ENCODE measurements at regions of chr10 and their contacts with region 1.

Region 1: DNA sequence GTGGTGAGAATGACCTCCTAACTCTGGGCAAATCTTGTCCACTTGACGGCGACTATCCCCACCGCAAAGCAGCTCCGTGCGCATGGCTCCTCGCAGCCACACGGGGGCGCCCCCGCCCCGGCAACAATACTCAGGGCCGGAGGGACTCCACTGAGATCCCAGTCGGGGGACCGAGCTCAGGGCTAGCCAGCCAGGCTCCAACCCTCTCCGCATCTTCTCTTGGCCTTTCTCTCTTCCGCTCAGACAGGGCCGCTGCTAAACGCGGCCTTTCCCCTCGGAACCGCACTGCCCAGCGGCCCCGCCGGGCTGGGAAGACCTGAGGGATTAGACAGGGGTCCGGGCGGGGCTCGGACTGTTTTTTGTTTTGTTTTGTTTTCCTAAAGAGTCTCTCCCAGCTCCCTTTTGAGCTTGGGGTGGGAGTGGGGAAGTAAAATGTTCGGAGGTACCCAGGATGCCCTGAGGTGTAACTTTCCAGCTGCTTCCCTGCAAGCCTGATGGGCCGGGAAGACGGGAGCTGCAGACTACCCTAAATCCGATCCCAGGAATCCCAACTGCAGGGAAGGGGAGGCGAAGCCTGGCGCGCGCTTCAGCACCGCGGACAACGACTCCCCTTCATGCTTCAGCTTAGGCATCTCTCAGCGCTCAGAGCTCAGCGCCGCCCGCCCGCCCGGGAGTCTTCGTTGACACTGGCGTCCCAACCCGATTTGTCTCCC is 2.7 kb downstream of the KCNIP2 start:
- DNase-seq: no peak
- H3K4me3 ChIP-seq: peak overlapping the region in 1 of 2 donors; percentile 26
- H3K27ac ChIP-seq: no peak overlapping the region
- H3K4me1 ChIP-seq: peaks cover 46% of the 10 kb centered on the region
- H3K27me3 ChIP-seq: no peaks in the 10 kb centered on the region
- CTCF ChIP-seq: peak; percentile 21 to 59 (median 41)
- POLR2A ChIP-seq: no peak

Region 2: DNA sequence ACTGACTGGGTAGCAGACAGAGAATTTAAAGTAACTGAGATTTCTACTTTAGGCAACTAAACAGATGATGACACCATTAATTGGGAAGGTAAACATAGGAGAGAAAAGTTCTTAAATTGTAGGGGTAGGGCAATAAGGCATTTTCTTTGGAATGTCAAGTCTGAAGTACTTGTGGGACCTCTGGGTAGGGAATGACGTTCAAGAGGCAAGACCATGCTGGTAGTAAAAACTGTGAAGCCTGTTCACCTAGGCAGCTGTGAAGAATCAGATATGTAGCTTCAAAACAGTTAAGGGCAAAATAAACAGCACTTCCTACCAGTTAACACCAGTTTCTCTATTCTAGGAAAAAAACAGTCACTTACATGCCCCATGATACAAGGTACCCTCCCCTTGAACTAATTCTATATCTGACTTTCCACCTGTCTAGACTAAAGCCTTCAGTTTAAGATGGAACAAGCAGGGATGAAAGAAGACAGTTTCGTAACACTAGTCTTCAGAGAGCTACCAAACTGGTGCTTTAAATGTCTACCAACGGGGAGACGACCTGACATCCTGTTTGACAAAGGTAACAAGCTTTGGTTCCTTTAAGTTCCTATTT is 65.8 kb after region 1 on chr10:
- intact Hi-C with region 1: no loop called
- DNase-seq: no peak
- H3K4me3 ChIP-seq: no peak overlapping the region
- H3K27ac ChIP-seq: no peak overlapping the region
- H3K4me1 ChIP-seq: no peaks in the 10 kb centered on the region
- H3K27me3 ChIP-seq: no peaks in the 10 kb centered on the region
- CTCF ChIP-seq: no peak
- POLR2A ChIP-seq: no peak

Region 3: GRCh38 chr10:102009801-102010425 is 169.0 kb after region 1 on chr10:
- intact Hi-C with region 1: loop called (anchors 10 kb)
- DNase-seq: peak in 1 of 2 donors; percentile 84
- H3K4me3 ChIP-seq: no peak overlapping the region
- H3K27ac ChIP-seq: no peak overlapping the region
- H3K4me1 ChIP-seq: no peaks in the 10 kb centered on the region
- H3K27me3 ChIP-seq: no peaks in the 10 kb centered on the region
- CTCF ChIP-seq: peak; percentile 58 to 78 (median 69)
- POLR2A ChIP-seq: no peak

Measured in vagina (tissue), 2 donors.